ENCODE measurements at regions of chr3 and their contacts with region 1.

Region 1: GRCh38 chr3:45688882-45689756 is at the start of gene SACM1L:
- DNase-seq: peak; percentile 91
- H3K4me3 ChIP-seq: peak within 1 kb of the TSS; percentile 86 to 90
- H3K27ac ChIP-seq: peak within 1 kb of the TSS; percentile 90 to 94
- H3K4me1 ChIP-seq: peaks cover 6 to 11% of the 10 kb centered on the region in 2 experiments; a peak in 2 of 4 replicates
- H3K27me3 ChIP-seq: no peaks in the 10 kb centered on the region
- CTCF ChIP-seq: no peak
- EP300 ChIP-seq: peak; percentile 39 to 60; a peak in 3 of 4 replicates
- RAD21 ChIP-seq: no peak; the same call in 1 of the 2 replicates
- polyA plus RNA-seq, gene SACM1L: 11.2 and 16.7 TPM in 2 replicates

Region 2: GRCh38 chr3:45705839-45706808 is 17.0 kb after region 1 on chr3:
- CTCF ChIA-PET with region 1: interaction called, 19 read pairs
- POLR2A ChIA-PET with region 1: interaction called, 4 read pairs
- DNase-seq: no peak
- H3K4me3 ChIP-seq: no peak overlapping the region
- H3K27ac ChIP-seq: no peak overlapping the region; a peak in 1 of 4 replicates
- H3K4me1 ChIP-seq: no peaks in the 10 kb centered on the region; a peak in 1 of 4 replicates
- H3K27me3 ChIP-seq: no peaks in the 10 kb centered on the region
- CTCF ChIP-seq: no peak
- EP300 ChIP-seq: no peak
- RAD21 ChIP-seq: no peak

Region 3: GRCh38 chr3:46027736-46028397 is 338.7 kb after region 1 on chr3:
- CTCF ChIA-PET with region 1: no interaction called
- POLR2A ChIA-PET with region 1: no interaction called
- DNase-seq: no peak
- H3K4me3 ChIP-seq: no peak overlapping the region
- H3K27ac ChIP-seq: no peak overlapping the region
- H3K4me1 ChIP-seq: no peaks in the 10 kb centered on the region
- H3K27me3 ChIP-seq: no peaks in the 10 kb centered on the region
- CTCF ChIP-seq: no peak
- EP300 ChIP-seq: no peak
- RAD21 ChIP-seq: no peak

Measured in SK-N-SH (cell line).